AG04449 (cell line): ENCODE measurements at regions of chr1 and their contacts with region 1.

Region 1: GRCh38 chr1:113072757-113073478 is at the start of gene LRIG2:
- DNase-seq: peak; percentile 92
- H3K4me3 ChIP-seq: peak within 1 kb of the TSS; percentile 99
- CTCF ChIP-seq: peak; percentile 91

Region 2: GRCh38 chr1:112715264-112716053 is 357.5 kb before region 1 on chr1 and contains the start of gene PPM1J:
- CTCF ChIA-PET with region 1: interaction called, 72 read pairs
- POLR2A ChIA-PET with region 1: interaction called, 4 read pairs
- DNase-seq: no peak
- H3K4me3 ChIP-seq: peak within 1 kb of the TSS; percentile 68
- CTCF ChIP-seq: no peak

Region 3: DNA sequence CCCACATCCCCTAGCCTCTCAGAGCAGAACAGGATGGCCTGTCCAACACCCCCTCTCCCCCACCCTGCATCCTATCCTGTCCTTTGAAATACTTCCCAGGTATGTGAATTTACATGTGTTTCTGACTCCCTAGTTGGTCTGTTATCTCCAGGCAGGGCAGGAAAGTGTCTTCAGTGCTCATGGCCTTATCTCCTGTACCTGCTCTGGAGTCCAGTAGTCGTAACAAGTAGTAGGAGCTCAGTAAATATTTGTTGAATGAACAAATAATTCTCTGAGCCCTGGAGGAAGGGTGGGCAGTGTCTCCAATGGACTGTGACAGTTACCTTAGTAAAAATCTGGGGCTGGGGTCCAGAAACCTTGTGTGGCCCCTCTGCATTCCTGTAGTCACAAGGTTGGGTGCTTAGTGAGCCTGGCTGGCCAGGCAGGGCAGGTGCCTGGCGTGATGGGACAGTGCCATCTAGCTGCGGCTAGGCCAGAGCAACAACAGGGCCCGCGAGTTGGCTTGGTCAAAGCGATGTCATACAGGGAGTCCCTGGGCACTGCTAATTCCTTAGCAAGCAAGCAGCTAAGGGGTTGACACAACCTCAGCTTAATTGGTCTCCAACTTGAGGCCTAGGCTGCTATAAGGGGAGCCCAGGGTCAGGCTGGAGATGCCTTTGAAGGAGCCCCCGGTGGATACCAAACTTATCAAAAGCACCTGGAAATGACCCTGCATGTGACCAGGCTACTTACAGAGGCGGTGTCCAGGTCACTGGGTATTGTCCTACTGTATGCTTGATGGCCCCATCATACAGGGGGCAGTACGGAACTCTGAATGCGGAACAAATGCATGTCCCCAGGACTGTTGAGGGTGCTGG is 268.8 kb before region 1 on chr1:
- CTCF ChIA-PET with region 1: interaction called, 25 read pairs
- POLR2A ChIA-PET with region 1: no interaction called
- DNase-seq: no peak
- H3K4me3 ChIP-seq: no peak overlapping the region
- CTCF ChIP-seq: peak; percentile 89

Region 4: GRCh38 chr1:112872551-112872962 is 200.4 kb before region 1 on chr1:
- CTCF ChIA-PET with region 1: interaction called, 81 read pairs
- POLR2A ChIA-PET with region 1: no interaction called
- DNase-seq: no peak
- H3K4me3 ChIP-seq: no peak overlapping the region
- CTCF ChIP-seq: no peak

Region 5: GRCh38 chr1:112935461-112936289 is 137.2 kb before region 1 on chr1:
- CTCF ChIA-PET with region 1: interaction called, 13 read pairs
- POLR2A ChIA-PET with region 1: no interaction called
- DNase-seq: no peak
- H3K4me3 ChIP-seq: no peak overlapping the region
- CTCF ChIP-seq: no peak

Region 6: GRCh38 chr1:113048064-113048463 is 24.9 kb before region 1 on chr1:
- CTCF ChIA-PET with region 1: interaction called, 155 read pairs
- POLR2A ChIA-PET with region 1: no interaction called
- DNase-seq: no peak
- H3K4me3 ChIP-seq: no peak overlapping the region
- CTCF ChIP-seq: no peak

Region 7: DNA sequence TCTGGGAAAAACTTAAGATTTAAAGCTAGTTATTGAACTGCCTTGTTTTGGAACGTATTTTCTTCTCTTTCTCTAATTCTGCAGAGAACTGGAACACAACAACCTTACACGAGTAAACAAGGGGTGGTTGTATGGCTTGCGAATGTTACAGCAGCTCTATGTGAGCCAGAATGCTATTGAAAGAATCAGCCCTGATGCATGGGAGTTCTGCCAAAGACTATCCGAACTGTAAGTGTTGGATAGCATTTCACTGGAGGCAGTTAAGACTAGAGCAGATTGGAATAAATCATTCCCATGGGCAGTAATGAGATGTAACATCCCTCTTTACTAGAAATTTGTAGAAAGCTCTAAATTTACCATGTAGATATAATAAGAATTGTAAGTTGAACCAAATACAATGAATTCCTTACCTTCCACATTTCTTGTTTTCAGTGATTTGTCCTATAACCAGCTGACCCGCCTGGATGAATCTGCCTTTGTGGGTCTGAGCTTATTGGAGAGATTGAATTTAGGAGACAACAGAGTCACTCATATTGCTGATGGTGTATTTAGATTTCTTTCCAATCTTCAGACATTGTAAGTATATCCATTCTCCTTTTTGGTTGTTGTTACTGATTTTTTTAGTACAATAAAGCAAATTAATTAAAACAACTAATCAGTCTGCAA is 23.0 kb after region 1 on chr1:
- CTCF ChIA-PET with region 1: interaction called, 63 read pairs
- POLR2A ChIA-PET with region 1: no interaction called
- DNase-seq: no peak
- H3K4me3 ChIP-seq: no peak overlapping the region
- CTCF ChIP-seq: no peak